Calu3 (cell line): ENCODE measurements at regions of chr13 and their contacts with region 1.

Region 1: DNA sequence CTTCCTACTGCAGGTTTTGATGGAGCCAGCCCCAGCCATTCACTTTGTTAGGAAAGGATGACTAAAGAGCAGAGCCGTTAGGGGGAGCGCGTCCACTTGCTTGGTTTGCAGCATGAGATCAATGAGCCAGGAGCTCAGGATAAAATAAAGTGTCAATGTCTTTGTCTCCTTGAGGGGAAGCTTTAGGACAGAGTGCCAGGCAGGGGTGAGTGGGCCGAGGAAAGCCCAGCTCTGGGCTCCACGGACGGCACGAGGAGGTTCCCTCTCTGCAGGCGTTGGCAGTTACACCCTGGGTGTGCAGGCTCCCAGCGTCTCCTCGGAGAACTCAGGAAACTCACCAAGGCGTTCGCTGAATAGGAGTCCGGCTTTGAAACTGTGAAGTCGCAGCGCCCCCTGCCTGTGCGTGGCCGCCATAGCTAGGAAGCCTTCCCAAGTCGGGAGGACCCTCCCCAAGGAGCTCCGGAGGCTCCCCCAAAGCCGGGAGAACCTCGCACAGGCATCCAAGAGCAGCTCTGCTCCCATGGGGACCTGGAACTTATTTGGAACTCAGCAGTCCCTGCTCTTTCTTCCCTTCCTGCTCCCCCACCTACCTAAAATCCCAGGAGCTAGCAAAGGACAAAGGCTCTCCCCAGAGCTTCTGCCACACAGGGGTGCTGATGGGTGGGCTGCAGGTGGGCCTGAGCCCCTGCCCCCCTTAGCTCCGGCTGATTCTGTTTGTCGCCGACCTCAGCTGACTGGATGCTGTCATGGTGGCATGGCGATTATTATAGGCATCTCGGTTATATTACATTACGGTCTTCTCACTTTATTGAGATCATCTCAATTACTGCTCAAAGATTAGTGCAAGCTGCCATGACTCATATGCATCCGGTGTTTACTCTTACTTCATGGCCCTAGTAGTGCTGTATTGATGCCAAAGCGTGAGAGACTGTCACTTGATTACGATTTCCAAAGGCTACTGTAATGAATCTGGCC is 34.4 kb downstream of the GSX1 start:
- DNase-seq: peak; percentile 80
- H3K4me3 Mint-ChIP-seq: peak overlapping the region; percentile 56
- H3K27ac Mint-ChIP-seq: no peak overlapping the region
- H3K4me1 Mint-ChIP-seq: no peaks in the 10 kb centered on the region
- H3K27me3 Mint-ChIP-seq: peaks cover 43% of the 10 kb centered on the region
- CTCF ChIP-seq: peak; percentile 83

Region 2: DNA sequence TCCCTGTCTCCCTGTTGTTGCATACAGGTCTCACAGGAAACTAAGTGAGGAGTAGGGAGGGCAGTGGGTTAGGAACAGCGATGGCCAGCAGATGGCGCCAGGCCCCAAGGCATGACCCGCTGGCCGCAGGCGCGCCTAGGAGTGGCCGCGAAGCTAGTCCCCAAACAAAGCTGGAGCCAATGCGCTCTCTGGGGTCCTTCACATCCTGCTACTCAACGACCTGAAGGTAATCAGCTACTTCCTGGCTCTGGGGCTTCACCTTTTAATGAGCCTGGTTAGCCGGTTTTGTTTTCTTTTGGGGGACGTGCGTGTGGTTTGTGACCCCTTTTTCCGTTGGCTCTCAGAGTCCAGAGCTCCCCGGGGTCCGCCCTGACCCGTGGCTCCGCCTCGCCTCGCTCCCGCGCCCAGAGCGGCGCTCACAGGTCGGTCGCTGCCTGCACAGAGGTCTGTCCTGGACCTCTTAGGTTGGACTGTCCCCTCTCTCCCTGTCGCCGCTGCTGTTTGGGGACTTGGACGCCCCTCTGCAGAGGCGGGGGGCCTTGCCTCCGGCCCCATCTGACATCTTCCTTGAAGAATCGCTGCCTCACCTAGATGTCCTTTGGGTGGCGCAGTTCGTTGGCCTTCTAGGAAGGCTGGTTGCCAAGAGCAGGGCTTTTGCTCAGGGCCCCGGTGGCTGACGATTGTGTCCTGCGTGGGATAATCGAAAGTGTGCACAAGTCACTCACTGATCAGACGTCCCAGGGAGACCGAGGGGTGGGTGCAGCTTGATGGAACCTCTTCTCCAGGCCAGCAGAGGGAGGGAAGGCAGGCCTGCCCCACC is 464.4 kb before region 1 on chr13:
- CTCF ChIA-PET with region 1: interaction called, 32 read pairs
- intact Hi-C with region 1: no loop called
- DNase-seq: peak; percentile 82
- H3K4me3 Mint-ChIP-seq: peak overlapping the region; percentile 41
- H3K27ac Mint-ChIP-seq: no peak overlapping the region
- H3K4me1 Mint-ChIP-seq: no peaks in the 10 kb centered on the region
- H3K27me3 Mint-ChIP-seq: peaks cover 27% of the 10 kb centered on the region
- CTCF ChIP-seq: peak; percentile 80

Region 3: DNA sequence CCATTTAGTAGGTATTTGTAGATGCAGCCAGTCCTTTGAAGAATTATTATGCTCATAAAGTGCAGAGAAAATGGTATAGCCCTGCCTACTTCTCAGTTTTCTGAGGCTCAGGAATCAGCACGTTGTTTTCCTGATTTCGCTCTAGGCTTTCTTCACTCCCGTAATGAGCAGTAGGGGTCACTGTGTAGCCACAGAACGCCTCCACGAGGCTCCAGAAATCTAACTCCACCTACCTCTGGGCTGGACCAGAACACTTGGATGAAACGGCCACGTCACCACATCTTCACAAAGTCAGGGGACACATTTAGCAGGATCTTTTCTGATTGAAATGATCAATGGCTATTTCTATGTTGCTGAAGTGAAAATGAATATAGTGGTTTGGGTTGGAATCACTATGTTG is 452.0 kb before region 1 on chr13:
- CTCF ChIA-PET with region 1: interaction called, 7 read pairs
- intact Hi-C with region 1: loop called (anchors 1 kb)
- DNase-seq: peak; percentile 57
- H3K4me3 Mint-ChIP-seq: no peak overlapping the region
- H3K27ac Mint-ChIP-seq: no peak overlapping the region
- H3K4me1 Mint-ChIP-seq: no peaks in the 10 kb centered on the region
- H3K27me3 Mint-ChIP-seq: peaks cover 26% of the 10 kb centered on the region
- CTCF ChIP-seq: peak; percentile 45

Region 4: GRCh38 chr13:27533155-27533643 is 293.5 kb before region 1 on chr13:
- CTCF ChIA-PET with region 1: interaction called, 23 read pairs
- intact Hi-C with region 1: loop called (anchors 1 kb)
- DNase-seq: peak; percentile 86
- H3K4me3 Mint-ChIP-seq: peak overlapping the region; percentile 61
- H3K27ac Mint-ChIP-seq: no peak overlapping the region
- H3K4me1 Mint-ChIP-seq: no peaks in the 10 kb centered on the region
- H3K27me3 Mint-ChIP-seq: no peaks in the 10 kb centered on the region
- CTCF ChIP-seq: peak; percentile 55

Region 5: DNA sequence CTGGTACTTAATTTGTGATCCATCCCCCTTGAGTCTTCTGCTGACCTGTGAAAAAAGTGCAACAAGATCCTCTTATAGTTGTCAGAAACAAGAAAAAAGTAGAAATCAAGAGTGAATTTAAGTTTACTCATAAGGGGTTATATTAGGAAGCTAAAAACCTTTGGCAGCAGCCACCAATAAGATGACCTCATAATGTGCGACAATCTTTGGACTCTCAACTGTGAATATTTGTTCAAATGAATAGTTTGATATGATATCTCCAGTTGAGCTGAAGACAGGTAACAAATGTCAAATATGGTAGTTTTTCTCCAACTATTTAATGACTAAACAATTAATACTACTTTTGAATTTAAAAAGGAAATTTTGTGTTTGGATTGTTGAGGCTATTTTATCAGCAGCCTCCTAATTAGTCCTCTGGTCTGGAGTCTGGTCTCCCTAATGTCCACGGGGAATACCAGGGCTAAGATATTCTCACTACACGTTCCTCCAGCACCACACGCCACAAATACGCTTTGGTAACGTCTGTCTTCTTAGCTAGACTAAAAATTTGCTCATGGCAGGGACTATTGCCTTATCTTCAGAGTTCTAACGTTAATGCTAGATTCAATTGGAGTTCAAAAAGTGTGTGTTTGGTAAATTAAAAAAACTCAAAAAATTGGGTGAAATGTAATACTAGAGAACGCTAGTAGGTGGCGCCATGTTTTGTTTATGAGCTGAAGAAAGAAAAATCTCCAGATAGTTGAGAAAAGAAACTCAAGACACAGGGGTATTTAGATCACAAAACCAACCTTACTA is 42.2 kb after region 1 on chr13:
- CTCF ChIA-PET with region 1: interaction called, 4 read pairs
- intact Hi-C with region 1: loop called (anchors 2 kb)
- DNase-seq: peak; percentile 5
- H3K4me3 Mint-ChIP-seq: no peak overlapping the region
- H3K27ac Mint-ChIP-seq: no peak overlapping the region
- H3K4me1 Mint-ChIP-seq: no peaks in the 10 kb centered on the region
- H3K27me3 Mint-ChIP-seq: no peaks in the 10 kb centered on the region
- CTCF ChIP-seq: peak; percentile 35

Region 6: GRCh38 chr13:27953676-27954405 is 127.2 kb after region 1 on chr13:
- CTCF ChIA-PET with region 1: interaction called, 40 read pairs
- intact Hi-C with region 1: loop called (anchors 1 kb)
- DNase-seq: peak; percentile 91
- H3K4me3 Mint-ChIP-seq: peak overlapping the region; percentile 81
- H3K27ac Mint-ChIP-seq: peak overlapping the region; percentile 93
- H3K4me1 Mint-ChIP-seq: peaks cover 7% of the 10 kb centered on the region
- H3K27me3 Mint-ChIP-seq: no peaks in the 10 kb centered on the region
- CTCF ChIP-seq: peak; percentile 68

Region 7: DNA sequence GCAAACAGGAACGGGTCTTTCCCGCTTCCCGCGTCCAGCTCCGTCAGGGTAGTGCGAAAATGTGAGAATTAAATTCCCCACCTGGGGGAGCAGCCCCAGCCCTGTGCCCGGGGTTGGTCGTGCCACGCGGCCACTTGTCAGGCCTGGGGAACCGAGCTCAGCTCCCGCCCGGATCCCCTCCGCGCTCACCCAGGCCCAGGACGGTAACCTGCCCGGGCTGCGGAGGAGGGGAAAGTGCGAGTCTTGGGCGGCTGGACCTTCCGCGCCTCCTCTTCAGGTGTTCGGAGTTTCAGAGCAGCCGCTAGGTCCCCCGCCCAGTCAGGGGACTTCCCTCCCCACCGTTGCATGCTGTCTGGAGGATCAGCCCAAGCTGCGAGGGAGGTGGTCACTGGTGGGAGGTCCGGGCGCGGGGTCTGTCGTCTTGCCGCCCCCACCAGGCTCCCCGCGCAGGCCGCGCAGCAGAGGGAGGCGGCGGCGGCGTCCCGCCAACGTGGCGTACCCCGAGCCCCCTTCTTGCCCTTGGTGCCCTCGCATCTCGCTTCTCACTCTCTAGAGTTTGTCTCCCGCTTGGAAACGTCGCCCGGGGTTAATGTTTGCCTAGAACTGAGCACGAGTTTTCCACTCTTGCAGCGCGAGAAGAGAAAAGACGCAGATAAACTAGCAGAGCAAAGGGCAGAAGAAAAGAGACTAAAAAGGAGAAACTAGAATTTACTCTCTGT is 153.8 kb after region 1 on chr13:
- CTCF ChIA-PET with region 1: interaction called, 8 read pairs
- intact Hi-C with region 1: loop called (anchors 10 kb)
- DNase-seq: no peak
- H3K4me3 Mint-ChIP-seq: peak overlapping the region; percentile 19
- H3K27ac Mint-ChIP-seq: no peak overlapping the region
- H3K4me1 Mint-ChIP-seq: peaks cover 16% of the 10 kb centered on the region
- H3K27me3 Mint-ChIP-seq: peaks cover 69% of the 10 kb centered on the region
- CTCF ChIP-seq: no peak

Region 8: DNA sequence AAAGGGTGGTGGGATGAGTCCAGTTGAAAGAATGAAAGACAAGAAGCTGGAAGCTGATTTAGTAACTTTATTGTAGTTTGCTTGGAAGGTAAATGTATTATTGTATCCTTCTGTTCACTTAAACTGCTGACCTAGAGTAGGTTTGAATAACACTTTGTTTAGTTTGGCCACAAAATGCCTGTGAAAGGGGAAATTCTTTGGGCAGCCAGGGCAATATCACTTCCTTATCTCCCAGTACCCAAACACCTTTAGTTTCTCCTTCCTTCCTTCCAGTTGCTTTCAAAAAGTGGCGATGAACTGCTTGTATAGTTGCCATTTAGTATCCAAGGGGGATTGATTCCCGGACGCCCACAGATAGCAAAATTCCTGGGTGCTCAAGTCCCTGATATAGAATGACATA is 431.8 kb after region 1 on chr13:
- CTCF ChIA-PET with region 1: no interaction called
- intact Hi-C with region 1: no loop called
- DNase-seq: no peak
- H3K4me3 Mint-ChIP-seq: no peak overlapping the region
- H3K27ac Mint-ChIP-seq: no peak overlapping the region
- H3K4me1 Mint-ChIP-seq: no peaks in the 10 kb centered on the region
- H3K27me3 Mint-ChIP-seq: no peaks in the 10 kb centered on the region
- CTCF ChIP-seq: no peak